ENCODE measurements at regions of chr1 and their contacts with region 1.

Region 1: DNA sequence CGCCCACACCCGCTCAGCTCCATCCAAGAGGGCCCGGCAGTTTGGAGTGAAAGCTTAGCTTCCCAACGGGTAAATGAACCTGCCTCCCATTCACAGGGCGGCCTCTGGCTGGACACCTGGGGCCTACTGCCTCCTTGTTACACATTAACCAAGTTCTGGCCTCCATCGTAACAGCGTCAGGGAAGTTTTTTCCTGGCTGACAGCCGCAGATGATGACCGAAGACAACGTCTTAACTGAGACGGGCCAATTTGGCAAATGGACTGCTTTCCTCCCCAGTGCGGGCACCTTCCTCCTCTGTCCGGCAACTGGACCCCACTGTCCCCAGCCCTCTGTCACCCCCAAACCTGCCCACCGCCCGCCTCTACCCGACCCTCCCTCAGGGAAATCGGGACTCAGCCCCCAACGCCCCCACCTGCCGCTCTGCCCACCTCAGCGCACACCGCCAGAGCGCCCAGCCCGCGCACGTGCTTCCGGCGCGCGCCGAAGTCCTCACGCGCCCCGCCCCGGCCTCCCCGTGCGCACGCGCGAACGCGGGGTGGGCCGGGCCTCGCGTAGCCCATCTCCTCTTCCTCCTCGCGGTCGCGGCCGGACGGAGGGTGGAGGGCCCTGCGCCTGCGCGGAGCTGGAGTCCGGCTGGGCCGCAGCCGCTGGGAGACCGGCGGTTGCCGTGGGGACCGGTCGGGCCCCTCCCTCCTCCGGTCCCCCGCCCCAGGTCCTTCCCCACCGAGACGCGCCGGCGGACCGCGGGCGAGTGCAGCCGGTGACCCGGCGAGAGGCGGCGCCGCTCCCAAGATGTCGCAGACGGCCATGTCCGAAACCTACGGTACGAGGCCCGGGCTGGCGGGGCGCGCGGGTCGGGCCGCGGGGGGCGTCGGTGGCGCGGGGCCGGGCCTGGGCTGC is at the start of gene RAB4A:
- DNase-seq: peak; percentile 96 to 100 (median 100)
- ATAC-seq: peak; percentile 96
- H3K4me3 ChIP-seq: peak within 1 kb of the TSS; percentile 78
- H3K27ac ChIP-seq: peak within 1 kb of the TSS; percentile 43
- H3K4me1 ChIP-seq: peaks cover 20 to 41% of the 10 kb centered on the region in 2 experiments; a peak in 4 of 5 replicates
- H3K27me3 ChIP-seq: no peaks in the 10 kb centered on the region; a peak in 1 of 5 replicates
- CTCF ChIP-seq: no peak
- EP300 ChIP-seq: no peak
- POLR2A ChIP-seq: peak; percentile 74
- RAD21 ChIP-seq: 0 out of 4 replicates have a peak, but pooled peaks of 1 of the 2 experiments have one; percentile 5
- polyA plus RNA-seq, gene RAB4A: 8.3 to 9.7 TPM

Region 2: GRCh38 chr1:228810878-228811711 is 459.7 kb before region 1 on chr1:
- CTCF ChIA-PET with region 1: no interaction called
- POLR2A ChIA-PET with region 1: no interaction called
- in situ Hi-C with region 1: no loop called
- intact Hi-C with region 1: no loop called
- DNase-seq: no peak
- ATAC-seq: no peak
- H3K4me3 ChIP-seq: no peak overlapping the region
- H3K27ac ChIP-seq: no peak overlapping the region
- H3K4me1 ChIP-seq: no peaks in the 10 kb centered on the region
- H3K27me3 ChIP-seq: peaks cover 4 to 34% of the 10 kb centered on the region in 2 experiments; a peak in 4 of 5 replicates
- CTCF ChIP-seq: no peak
- EP300 ChIP-seq: no peak
- POLR2A ChIP-seq: no peak
- RAD21 ChIP-seq: no peak

Region 3: GRCh38 chr1:229341774-229342655 is 71.2 kb after region 1 on chr1:
- CTCF ChIA-PET with region 1: no interaction called
- POLR2A ChIA-PET with region 1: interaction called, 3 read pairs
- in situ Hi-C with region 1: no loop called
- intact Hi-C with region 1: loop called (anchors 1 kb)
- DNase-seq: peak; percentile 89 to 97 (median 96)
- ATAC-seq: peak; percentile 91
- H3K4me3 ChIP-seq: peak overlapping the region; percentile 85
- H3K27ac ChIP-seq: peak overlapping the region; percentile 79
- H3K4me1 ChIP-seq: peaks cover 17 to 24% of the 10 kb centered on the region in 2 experiments; a peak in 4 of 5 replicates
- H3K27me3 ChIP-seq: peaks cover under 1 to 5% of the 10 kb centered on the region in 2 experiments; a peak in 3 of 5 replicates
- CTCF ChIP-seq: no peak
- EP300 ChIP-seq: no peak
- POLR2A ChIP-seq: peak; percentile 70
- RAD21 ChIP-seq: no peak

Region 4: DNA sequence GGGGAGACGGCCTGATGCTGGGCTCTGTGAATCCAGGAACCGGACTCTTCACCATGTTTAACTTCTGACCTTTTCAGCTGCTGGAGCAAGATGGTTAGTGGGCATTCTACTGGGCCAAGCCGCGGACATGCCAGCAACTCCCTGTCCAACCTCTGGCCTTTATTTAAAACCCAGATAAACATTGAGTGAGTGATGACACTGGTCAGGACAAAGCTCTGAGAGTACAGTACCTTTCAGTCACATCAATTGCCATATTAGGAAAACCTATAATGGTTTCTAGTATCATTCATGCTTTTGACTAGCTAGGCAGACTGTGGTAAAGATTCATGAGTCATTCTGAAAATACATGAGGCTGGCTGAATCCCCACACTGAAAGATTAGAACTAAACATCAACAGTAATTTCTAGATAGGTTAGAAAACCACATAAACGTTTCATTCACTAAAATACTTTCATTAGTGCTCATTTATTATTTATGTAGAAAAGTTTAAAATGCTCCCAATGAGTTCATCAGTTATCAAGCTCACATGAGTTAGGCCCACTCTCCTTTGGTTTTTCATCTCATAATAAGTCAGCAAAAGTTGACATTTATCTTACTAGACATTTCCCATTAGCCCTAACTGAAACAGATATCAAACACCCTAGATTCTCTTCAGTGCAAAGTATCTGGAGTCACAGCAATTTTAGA is 170.2 kb after region 1 on chr1:
- CTCF ChIA-PET with region 1: no interaction called
- POLR2A ChIA-PET with region 1: no interaction called
- in situ Hi-C with region 1: no loop called
- intact Hi-C with region 1: no loop called
- DNase-seq: no peak
- ATAC-seq: no peak; the same call in 2 of the 3 replicates
- H3K4me3 ChIP-seq: no peak overlapping the region
- H3K27ac ChIP-seq: 0 out of 3 replicates have a peak overlapping the region, but pooled peaks have one; percentile 3
- H3K4me1 ChIP-seq: no peaks in the 10 kb centered on the region
- H3K27me3 ChIP-seq: no peaks in the 10 kb centered on the region; a peak in 1 of 5 replicates
- CTCF ChIP-seq: no peak
- EP300 ChIP-seq: no peak
- POLR2A ChIP-seq: no peak
- RAD21 ChIP-seq: no peak

Measured in K562 (cell line).